IMR-90 (cell line): ENCODE measurements at regions of chr6 and their contacts with region 1.

Region 1: DNA sequence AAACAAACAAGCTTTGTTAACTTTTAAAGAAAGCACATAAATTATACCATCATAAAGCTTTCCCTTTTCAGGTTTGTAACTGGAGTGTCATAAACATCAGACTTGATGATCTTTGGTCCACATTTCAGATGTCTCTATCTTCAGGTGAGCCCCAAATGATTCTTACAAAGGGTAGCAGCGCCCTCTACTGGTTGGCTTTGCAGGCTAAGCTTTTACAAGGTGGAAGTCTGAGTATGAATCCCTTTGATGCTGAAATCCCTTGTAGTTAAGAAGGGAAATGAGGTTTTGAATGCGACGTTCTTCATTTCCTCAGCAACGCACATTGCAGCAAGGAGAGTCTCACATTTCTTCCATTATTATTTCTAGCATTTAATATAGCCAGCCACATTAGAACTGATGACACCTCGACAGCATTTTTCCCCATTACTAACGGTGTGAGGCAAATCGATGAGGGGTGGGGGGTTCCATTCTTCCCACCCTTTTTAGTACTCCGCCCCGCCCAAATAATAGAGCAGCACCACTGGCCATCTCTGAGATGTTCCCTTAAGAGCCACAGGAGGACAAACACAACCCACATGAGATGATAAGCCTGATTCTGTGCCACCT is 126.3 kb upstream of the NT5E start:
- DNase-seq: peak; percentile 77
- ATAC-seq: peak; percentile 89
- H3K4me3 ChIP-seq: no peak overlapping the region
- H3K27ac ChIP-seq: no peak overlapping the region
- H3K4me1 ChIP-seq: no peaks in the 10 kb centered on the region
- H3K27me3 ChIP-seq: peaks cover 11% of the 10 kb centered on the region
- CTCF ChIP-seq: peak; percentile 89
- POLR2A ChIP-seq: no peak
- RAD21 ChIP-seq: peak; percentile 83

Region 2: GRCh38 chr6:83615025-83615999 is 1708.2 kb before region 1 on chr6:
- CTCF ChIA-PET with region 1: no interaction called
- POLR2A ChIA-PET with region 1: no interaction called
- dilution Hi-C with region 1: no loop called
- in situ Hi-C with region 1: no loop called
- intact Hi-C with region 1: loop called (anchors 2 kb)
- DNase-seq: peak; percentile 37
- ATAC-seq: peak; percentile 69
- H3K4me3 ChIP-seq: no peak overlapping the region
- H3K27ac ChIP-seq: no peak overlapping the region
- H3K4me1 ChIP-seq: no peaks in the 10 kb centered on the region
- H3K27me3 ChIP-seq: no peaks in the 10 kb centered on the region
- CTCF ChIP-seq: peak; percentile 54
- POLR2A ChIP-seq: no peak
- RAD21 ChIP-seq: peak; percentile 48

Region 3: DNA sequence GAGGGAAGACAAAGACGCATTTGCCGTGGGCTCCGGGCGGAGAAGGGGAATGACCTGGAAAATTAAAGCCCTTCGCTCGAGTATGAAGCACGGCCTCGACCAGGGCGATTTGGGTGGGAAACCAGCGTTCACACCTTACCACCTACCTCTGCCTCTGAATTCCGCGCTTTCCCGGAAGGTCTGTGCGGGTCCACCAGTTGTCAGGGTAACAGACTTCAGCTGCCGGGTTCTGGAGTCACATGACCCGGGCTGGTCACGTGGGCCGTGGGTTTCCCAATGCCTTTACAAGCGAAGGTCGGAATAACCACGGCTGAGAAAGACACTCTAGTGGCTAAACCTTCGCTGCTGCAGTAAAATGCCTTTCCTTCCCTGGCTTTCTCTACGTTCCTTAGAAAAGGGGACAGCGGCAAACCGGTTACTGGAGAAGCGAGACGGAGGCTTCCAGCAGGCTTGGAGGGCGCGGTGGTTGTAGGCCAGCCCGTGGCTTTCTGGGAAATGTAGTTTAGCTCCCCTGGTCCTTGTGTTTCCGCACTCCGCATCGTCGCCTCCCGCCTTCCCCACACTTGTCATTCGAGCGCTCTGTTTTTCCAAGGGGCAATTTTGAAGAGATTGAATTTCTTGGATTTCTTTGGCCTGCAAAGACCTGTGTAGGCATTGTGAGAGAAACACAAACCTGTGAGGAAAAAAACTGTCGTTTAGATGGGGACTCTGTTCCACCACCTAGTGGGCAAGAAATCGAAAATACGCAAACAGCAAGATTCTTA is 1095.9 kb before region 1 on chr6 and contains the start of gene CEP162:
- CTCF ChIA-PET with region 1: no interaction called
- POLR2A ChIA-PET with region 1: no interaction called
- dilution Hi-C with region 1: no loop called
- in situ Hi-C with region 1: no loop called
- intact Hi-C with region 1: loop called (anchors 2 kb)
- DNase-seq: peak; percentile 77
- ATAC-seq: peak; percentile 99
- H3K4me3 ChIP-seq: peak within 1 kb of the TSS; percentile 93
- H3K27ac ChIP-seq: peak within 1 kb of the TSS; percentile 97
- H3K4me1 ChIP-seq: no peaks in the 10 kb centered on the region
- H3K27me3 ChIP-seq: no peaks in the 10 kb centered on the region
- CTCF ChIP-seq: peak; percentile 64
- POLR2A ChIP-seq: no peak
- RAD21 ChIP-seq: peak; percentile 43
- total RNA-seq, gene CEP162: 1.6 and 4.7 TPM in 2 replicates

Region 4: DNA sequence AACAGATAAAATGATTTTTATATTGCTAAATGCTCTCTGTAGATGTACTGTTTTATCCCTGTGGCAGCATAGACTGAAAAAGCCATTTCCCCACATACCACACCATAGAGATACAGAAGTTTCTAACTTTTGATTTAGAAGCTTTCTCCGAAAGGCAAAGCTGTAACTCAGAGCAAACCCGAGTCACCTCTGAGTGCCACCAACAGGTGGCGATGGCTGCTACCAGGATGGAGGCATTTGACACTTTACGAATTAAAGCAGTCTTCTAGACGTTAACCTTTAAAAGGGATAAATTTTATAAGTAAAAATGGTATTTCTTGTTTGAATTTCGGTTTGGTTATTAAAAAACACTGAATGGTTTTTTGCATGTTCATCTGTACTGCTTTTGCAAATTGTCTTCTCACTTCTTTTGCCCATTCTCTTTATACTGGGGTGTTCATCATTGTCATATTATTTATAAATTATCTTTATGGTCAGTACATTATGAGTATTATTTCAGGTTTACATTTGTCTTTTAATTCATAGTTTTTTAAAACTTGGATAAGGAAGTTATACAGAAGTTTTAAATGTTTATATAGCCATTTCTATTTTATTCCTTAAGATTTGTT is 895.1 kb before region 1 on chr6:
- CTCF ChIA-PET with region 1: no interaction called
- POLR2A ChIA-PET with region 1: no interaction called
- dilution Hi-C with region 1: no loop called
- in situ Hi-C with region 1: loop called (anchors 5 kb)
- intact Hi-C with region 1: loop called (anchors 2 kb)
- DNase-seq: peak; percentile 45
- ATAC-seq: peak; percentile 46
- H3K4me3 ChIP-seq: no peak overlapping the region
- H3K27ac ChIP-seq: no peak overlapping the region
- H3K4me1 ChIP-seq: no peaks in the 10 kb centered on the region
- H3K27me3 ChIP-seq: peaks cover 7% of the 10 kb centered on the region
- CTCF ChIP-seq: peak; percentile 78
- POLR2A ChIP-seq: no peak
- RAD21 ChIP-seq: peak; percentile 82

Region 5: GRCh38 chr6:85015396-85015990 is 308.0 kb before region 1 on chr6:
- CTCF ChIA-PET with region 1: no interaction called
- POLR2A ChIA-PET with region 1: no interaction called
- dilution Hi-C with region 1: no loop called
- in situ Hi-C with region 1: no loop called
- intact Hi-C with region 1: loop called (anchors 1 kb)
- DNase-seq: peak; percentile 42
- ATAC-seq: peak; percentile 92
- H3K4me3 ChIP-seq: no peak overlapping the region
- H3K27ac ChIP-seq: no peak overlapping the region
- H3K4me1 ChIP-seq: no peaks in the 10 kb centered on the region
- H3K27me3 ChIP-seq: peaks cover 2% of the 10 kb centered on the region; the same call in 1 of the 2 replicates
- CTCF ChIP-seq: peak; percentile 67
- POLR2A ChIP-seq: no peak
- RAD21 ChIP-seq: peak; percentile 52

Region 6: DNA sequence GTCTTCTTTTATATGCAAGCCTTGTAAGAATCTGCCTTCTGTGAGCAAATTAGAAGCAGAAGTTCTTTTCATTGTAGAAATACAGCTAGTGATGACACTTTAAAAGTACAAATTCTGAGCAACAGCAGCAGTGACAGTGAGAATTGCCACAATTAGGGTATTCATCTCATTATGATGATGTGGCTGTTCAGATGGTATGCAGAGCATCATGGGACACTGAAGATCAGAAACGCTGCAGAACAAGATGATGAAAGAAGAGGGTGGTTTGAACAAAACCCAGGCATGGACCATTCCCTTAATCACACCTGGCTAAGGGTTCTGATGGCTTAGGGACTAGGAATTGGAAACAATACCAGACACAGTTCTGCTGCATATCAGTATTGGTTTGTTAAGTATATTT is 246.4 kb before region 1 on chr6:
- CTCF ChIA-PET with region 1: no interaction called
- POLR2A ChIA-PET with region 1: no interaction called
- dilution Hi-C with region 1: no loop called
- in situ Hi-C with region 1: no loop called
- intact Hi-C with region 1: no loop called
- DNase-seq: no peak
- ATAC-seq: no peak
- H3K4me3 ChIP-seq: no peak overlapping the region
- H3K27ac ChIP-seq: no peak overlapping the region
- H3K4me1 ChIP-seq: peaks cover 2% of the 10 kb centered on the region; the same call in 1 of the 2 replicates
- H3K27me3 ChIP-seq: no peaks in the 10 kb centered on the region
- CTCF ChIP-seq: no peak
- POLR2A ChIP-seq: no peak
- RAD21 ChIP-seq: no peak